ENCODE measurements at regions of chr2 and their contacts with region 1.

Region 1: DNA sequence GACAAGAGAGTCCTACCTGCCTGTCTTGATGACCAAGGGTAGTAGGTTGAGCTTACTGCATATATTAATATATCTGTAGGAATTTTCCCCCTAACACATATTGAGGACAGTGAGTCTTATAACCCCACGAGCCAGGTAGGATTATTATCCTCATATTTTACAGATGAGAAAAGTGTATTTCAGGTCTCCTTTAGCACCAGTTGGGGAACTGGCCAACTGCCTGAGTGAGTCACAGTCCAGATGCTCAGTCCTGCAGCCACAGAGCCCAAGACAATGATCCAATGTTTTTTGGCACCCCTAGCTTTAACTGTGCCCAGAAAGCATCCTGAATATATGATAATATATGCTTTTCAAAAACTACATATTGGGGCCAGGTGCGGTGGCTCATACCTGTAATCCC is 30.8 kb upstream of the GLS start:
- DNase-seq: peak in 1 of 2 experiments; percentile 26
- ATAC-seq: peak in 1 of 2 experiments; percentile 29; a peak in 3 of 6 replicates
- H3K4me3 ChIP-seq: no peak overlapping the region
- H3K27ac ChIP-seq: peak overlapping the region; percentile 58 to 78
- H3K4me1 ChIP-seq: peaks cover 54% of the 10 kb centered on the region
- CTCF ChIP-seq: no peak
- EP300 ChIP-seq: no peak
- POLR2A ChIP-seq: no peak
- RAD21 ChIP-seq: no peak

Region 2: DNA sequence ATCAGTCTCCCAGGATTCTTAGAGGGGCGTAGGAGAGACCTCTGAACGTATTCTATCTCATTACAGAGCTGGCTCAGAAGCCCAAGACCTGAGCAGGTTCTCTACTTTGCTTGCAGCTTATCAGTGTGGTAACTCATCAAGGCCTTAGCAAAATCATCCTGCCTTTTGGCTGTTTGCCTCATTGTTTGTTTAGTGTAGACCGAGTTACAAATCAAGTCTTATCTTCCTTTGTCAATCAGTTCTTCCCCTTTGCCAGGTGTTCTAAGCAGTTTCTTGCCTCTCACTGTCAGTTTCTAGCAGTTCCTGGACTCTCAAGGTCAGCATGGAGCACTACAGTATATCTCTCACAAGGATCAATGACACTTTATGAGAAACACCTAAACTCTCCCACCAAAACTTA is 231.7 kb before region 1 on chr2:
- CTCF ChIA-PET with region 1: no interaction called
- POLR2A ChIA-PET with region 1: no interaction called
- DNase-seq: no peak
- ATAC-seq: no peak
- H3K4me3 ChIP-seq: no peak overlapping the region
- H3K27ac ChIP-seq: 0 out of 6 replicates have a peak overlapping the region, but pooled peaks of 1 of the 2 experiments have one; percentile 4
- H3K4me1 ChIP-seq: peaks cover 7% of the 10 kb centered on the region; the same call in 2 of the 3 replicates
- CTCF ChIP-seq: no peak
- EP300 ChIP-seq: no peak
- POLR2A ChIP-seq: no peak
- RAD21 ChIP-seq: no peak

Region 3: GRCh38 chr2:190863946-190864345 is 14.2 kb after region 1 on chr2:
- CTCF ChIA-PET with region 1: interaction called, 13 read pairs
- POLR2A ChIA-PET with region 1: interaction called, 9 read pairs
- DNase-seq: no peak
- ATAC-seq: no peak; a peak in 1 of 6 replicates
- H3K4me3 ChIP-seq: no peak overlapping the region
- H3K27ac ChIP-seq: peak overlapping the region; percentile 33 to 91; a peak in 5 of 6 replicates
- H3K4me1 ChIP-seq: peaks cover 67% of the 10 kb centered on the region
- CTCF ChIP-seq: no peak
- EP300 ChIP-seq: no peak
- POLR2A ChIP-seq: no peak
- RAD21 ChIP-seq: no peak

Region 4: GRCh38 chr2:190891372-190891771 is 41.6 kb after region 1 on chr2:
- CTCF ChIA-PET with region 1: interaction called, 10 read pairs
- POLR2A ChIA-PET with region 1: no interaction called
- DNase-seq: no peak
- ATAC-seq: no peak
- H3K4me3 ChIP-seq: no peak overlapping the region
- H3K27ac ChIP-seq: peak overlapping the region in 1 of 2 experiments; percentile 51; a peak in 2 of 6 replicates
- H3K4me1 ChIP-seq: peaks cover 100% of the 10 kb centered on the region
- CTCF ChIP-seq: no peak
- EP300 ChIP-seq: no peak
- POLR2A ChIP-seq: no peak
- RAD21 ChIP-seq: no peak

Region 5: DNA sequence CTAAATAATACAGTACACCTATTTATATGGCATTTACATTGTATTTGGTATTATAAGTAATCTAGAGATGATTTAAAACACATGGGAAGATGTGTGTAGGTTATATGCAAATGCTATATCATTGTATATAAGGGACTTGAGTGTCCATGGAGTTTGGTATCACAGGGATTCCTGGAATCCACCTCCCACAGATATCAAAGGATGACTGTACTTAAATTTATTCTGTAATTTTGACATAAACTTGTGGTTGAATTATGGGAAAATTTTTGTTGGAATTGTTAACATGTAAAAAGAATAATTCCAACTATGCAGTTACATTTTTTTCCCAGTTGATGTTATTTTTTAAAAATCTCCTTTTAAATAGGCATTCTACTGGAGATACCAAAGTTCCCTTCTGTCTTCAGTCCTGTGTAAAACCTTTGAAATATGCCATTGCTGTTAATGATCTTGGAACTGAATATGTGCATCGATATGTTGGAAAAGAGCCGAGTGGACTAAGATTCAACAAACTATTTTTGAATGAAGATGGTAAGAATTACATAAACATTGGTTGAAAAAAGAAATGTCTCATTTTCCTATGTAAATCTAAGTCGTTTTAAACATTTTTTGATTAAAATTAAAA is 55.0 kb after region 1 on chr2:
- CTCF ChIA-PET with region 1: no interaction called
- POLR2A ChIA-PET with region 1: no interaction called
- DNase-seq: no peak
- ATAC-seq: peak in 1 of 2 experiments; percentile 26; a peak in 1 of 6 replicates
- H3K4me3 ChIP-seq: no peak overlapping the region
- H3K27ac ChIP-seq: peak overlapping the region in 1 of 2 experiments; percentile 71; a peak in 3 of 6 replicates
- H3K4me1 ChIP-seq: peaks cover 77% of the 10 kb centered on the region
- CTCF ChIP-seq: no peak
- EP300 ChIP-seq: no peak
- POLR2A ChIP-seq: no peak
- RAD21 ChIP-seq: no peak

Measured in A549 (cell line).